ENCODE measurements at regions of chr1 and their contacts with region 1.

Region 1: DNA sequence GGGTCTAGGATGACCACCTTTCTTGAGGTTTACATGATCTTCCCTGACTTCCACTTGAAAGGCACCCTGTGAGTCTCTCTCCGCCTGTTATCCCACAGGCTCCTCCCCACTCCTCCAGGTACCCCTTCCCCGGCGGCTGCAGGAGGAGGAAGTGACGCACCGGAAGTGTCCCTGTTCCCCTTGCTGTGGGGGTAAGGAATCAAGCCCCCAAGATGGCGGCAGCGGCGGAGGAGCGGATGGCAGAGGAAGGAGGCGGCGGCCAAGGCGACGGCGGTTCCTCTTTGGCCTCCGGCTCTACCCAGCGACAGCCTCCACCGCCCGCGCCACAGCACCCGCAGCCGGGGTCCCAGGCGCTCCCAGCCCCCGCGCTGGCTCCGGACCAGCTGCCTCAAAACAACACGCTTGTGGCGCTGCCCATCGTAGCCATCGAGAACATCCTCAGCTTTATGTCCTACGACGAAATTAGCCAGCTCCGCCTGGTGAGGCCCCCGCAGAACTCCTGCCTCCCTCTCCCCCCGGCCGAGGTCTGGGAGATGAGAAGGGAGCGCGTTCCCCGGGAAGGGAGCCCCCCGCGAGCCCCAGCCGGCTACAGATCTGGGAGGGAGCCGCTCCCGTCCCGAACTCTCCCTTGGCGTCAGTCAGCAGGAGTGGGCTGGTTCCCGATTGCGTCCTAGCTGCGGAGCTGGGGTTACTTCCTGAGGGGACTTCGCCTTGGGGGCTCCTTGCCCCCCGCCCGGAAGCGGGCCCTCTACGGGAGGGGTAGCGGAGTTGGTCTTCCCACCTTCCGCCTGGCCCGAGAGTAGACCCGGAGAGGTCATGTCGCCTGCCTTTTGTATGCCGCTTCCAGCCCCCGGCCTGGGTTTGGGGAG is at the start of gene FBXO28:
- DNase-seq: peak; percentile 86 to 96 (median 88)
- H3K4me3 ChIP-seq: peak within 1 kb of the TSS; percentile 77
- H3K4me3 Mint-ChIP-seq: peak within 1 kb of the TSS; percentile 89 to 94 (median 92)
- H3K27ac ChIP-seq: peak within 1 kb of the TSS; percentile 89
- H3K27ac Mint-ChIP-seq: peak within 1 kb of the TSS; percentile 88 to 99 (median 94)
- H3K4me1 ChIP-seq: peaks cover 24% of the 10 kb centered on the region
- H3K4me1 Mint-ChIP-seq: peaks cover 26 to 41% (median 32%) of the 10 kb centered on the region in 3 donors
- H3K27me3 ChIP-seq: no peaks in the 10 kb centered on the region
- H3K27me3 Mint-ChIP-seq: peaks cover 5 to 13% of the 10 kb centered on the region in 2 donors
- total RNA-seq, gene FBXO28: 31.6 to 32.2 TPM

Region 2: DNA sequence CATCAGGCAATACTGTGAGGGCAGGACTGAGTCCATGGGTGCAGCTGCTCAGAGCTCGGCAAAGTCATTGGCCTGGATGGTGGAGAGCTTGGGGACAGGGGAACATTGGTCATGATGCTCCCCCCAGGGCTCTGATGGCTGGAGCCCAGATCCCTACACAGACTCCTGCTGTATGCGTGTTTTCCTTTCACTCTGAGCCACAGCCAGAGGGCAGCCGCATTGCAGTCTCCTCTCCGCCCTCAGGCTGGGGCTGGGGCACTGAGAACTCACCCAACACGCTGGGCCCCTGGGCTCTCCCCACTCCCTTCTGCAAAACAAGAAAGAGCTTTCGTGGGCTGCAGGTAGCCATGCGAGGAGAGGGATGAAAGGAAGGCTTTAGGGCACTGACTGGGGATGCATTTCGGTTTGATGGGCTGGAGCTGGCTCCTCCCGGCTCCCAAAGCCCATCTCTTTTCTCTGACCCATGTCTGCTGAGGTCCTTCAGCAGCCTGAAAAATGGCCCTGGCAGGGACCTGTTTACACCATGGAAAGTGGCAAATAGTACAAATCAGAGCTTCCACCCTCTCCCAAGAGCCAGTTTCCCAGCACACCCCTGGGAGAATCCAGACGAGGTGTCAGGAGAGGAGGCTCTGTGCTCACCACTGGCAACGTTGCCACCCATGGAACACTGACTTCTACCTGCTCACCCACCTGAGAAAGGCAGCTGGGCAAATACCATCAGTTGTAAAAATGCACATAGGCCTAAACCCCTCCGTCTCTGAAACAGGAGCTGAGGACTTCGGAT is 358.0 kb before region 1 on chr1:
- CTCF ChIA-PET with region 1: no interaction called
- POLR2A ChIA-PET with region 1: no interaction called
- DNase-seq: no peak
- H3K4me3 ChIP-seq: no peak overlapping the region
- H3K4me3 Mint-ChIP-seq: no peak overlapping the region
- H3K27ac ChIP-seq: no peak overlapping the region
- H3K27ac Mint-ChIP-seq: peak overlapping the region in 1 of 8 donors; percentile 14
- H3K4me1 ChIP-seq: no peaks in the 10 kb centered on the region
- H3K4me1 Mint-ChIP-seq: no peaks in the 10 kb centered on the region
- H3K27me3 ChIP-seq: no peaks in the 10 kb centered on the region
- H3K27me3 Mint-ChIP-seq: no peaks in the 10 kb centered on the region

Region 3: GRCh38 chr1:223853748-223854147 is 260.4 kb before region 1 on chr1:
- CTCF ChIA-PET with region 1: no interaction called
- POLR2A ChIA-PET with region 1: no interaction called
- DNase-seq: no peak
- H3K4me3 ChIP-seq: no peak overlapping the region
- H3K4me3 Mint-ChIP-seq: no peak overlapping the region
- H3K27ac ChIP-seq: no peak overlapping the region
- H3K27ac Mint-ChIP-seq: peak overlapping the region in 2 of 8 donors; percentile 53 to 63
- H3K4me1 ChIP-seq: no peaks in the 10 kb centered on the region
- H3K4me1 Mint-ChIP-seq: no peaks in the 10 kb centered on the region
- H3K27me3 ChIP-seq: no peaks in the 10 kb centered on the region
- H3K27me3 Mint-ChIP-seq: peaks cover 0 to 1% of the 10 kb centered on the region in 2 donors

Region 4: GRCh38 chr1:224095867-224096266 is 18.3 kb before region 1 on chr1:
- CTCF ChIA-PET with region 1: no interaction called
- POLR2A ChIA-PET with region 1: no interaction called
- DNase-seq: no peak
- H3K4me3 ChIP-seq: no peak overlapping the region
- H3K4me3 Mint-ChIP-seq: no peak overlapping the region
- H3K27ac ChIP-seq: no peak overlapping the region
- H3K27ac Mint-ChIP-seq: no peak overlapping the region
- H3K4me1 ChIP-seq: no peaks in the 10 kb centered on the region
- H3K4me1 Mint-ChIP-seq: no peaks in the 10 kb centered on the region
- H3K27me3 ChIP-seq: peaks cover 3% of the 10 kb centered on the region
- H3K27me3 Mint-ChIP-seq: peaks cover 14 to 32% of the 10 kb centered on the region in 2 donors

Region 5: GRCh38 chr1:224333309-224333926 is 219.3 kb after region 1 on chr1:
- CTCF ChIA-PET with region 1: interaction called, 39 read pairs
- POLR2A ChIA-PET with region 1: interaction called, 4 read pairs
- DNase-seq: peak in 2 of 5 donors; percentile 46 to 58
- H3K4me3 ChIP-seq: no peak overlapping the region
- H3K4me3 Mint-ChIP-seq: peak overlapping the region in 1 of 7 donors; percentile 87
- H3K27ac ChIP-seq: no peak overlapping the region
- H3K27ac Mint-ChIP-seq: peak overlapping the region in 7 of 8 donors; percentile 30 to 83 (median 72)
- H3K4me1 ChIP-seq: peaks cover 11% of the 10 kb centered on the region
- H3K4me1 Mint-ChIP-seq: peaks cover 34 to 46% (median 40%) of the 10 kb centered on the region in 3 donors
- H3K27me3 ChIP-seq: no peaks in the 10 kb centered on the region
- H3K27me3 Mint-ChIP-seq: no peaks in the 10 kb centered on the region